T-cell (primary cell): ENCODE measurements at regions of chr14 and their contacts with region 1.

Region 1: DNA sequence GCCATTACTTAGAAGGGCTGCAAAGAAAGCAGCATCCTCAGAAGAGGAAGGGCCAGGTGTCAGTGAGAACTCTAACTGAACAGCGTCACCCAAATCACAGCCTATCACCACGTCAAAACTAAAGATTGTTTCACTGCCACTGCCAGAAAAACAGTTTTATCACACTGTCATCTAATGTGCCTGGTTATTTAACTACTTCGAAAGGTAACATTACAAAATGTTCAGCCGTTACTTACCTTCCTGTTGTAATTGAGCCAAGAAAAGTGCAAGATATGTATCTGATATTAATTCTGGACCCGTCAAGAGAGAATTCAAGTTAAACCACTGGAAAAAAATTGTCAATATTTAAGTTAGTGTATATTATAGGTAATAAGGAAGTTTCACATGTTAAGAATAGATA is 17.9 kb downstream of the ATXN3 start:
- DNase-seq: no peak
- ATAC-seq: no peak
- H3K4me3 ChIP-seq: no peak overlapping the region
- H3K4me3 Mint-ChIP-seq: no peak overlapping the region
- H3K27ac ChIP-seq: no peak overlapping the region
- H3K27ac Mint-ChIP-seq: no peak overlapping the region
- H3K4me1 ChIP-seq: no peaks in the 10 kb centered on the region
- H3K4me1 Mint-ChIP-seq: no peaks in the 10 kb centered on the region
- H3K27me3 ChIP-seq: no peaks in the 10 kb centered on the region
- H3K27me3 Mint-ChIP-seq: no peaks in the 10 kb centered on the region

Region 2: DNA sequence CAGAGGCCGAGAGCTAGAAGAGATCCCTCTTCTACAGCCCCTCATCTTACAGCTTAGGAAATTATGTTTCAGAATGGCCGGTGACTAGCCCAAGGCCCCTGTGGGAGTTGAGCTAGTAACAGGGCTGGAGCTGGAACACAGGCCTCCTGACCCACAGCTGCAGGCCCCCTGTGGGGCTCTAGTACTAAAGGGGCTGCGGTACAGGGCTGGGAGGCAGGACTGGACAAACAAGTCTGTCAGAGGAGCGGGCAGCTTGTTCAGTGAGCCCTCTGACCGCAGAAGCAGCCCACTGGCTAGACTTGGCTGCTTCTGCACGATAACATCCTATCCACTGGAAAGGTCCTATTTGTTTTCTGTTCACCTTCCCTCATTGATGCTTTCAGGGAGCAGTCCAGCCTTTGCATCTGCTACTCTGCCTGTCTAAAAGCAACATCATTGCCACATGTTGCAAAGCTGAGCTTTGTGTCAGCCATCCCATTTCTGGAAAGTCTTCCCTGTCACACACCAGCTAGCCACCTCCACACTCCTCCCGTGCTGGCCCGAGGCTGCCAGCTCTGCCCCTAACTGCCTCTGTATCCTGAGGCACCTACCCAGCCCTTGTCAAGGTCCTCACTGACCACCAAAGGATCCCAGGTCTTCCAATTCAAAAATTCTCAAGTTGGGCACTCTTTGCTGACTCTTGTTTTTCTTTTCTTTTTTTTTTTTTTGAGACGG is 1821.9 kb before region 1 on chr14:
- CTCF ChIA-PET with region 1: interaction called in 1 of 2 experiments, 10 read pairs
- POLR2A ChIA-PET with region 1: no interaction called
- DNase-seq: no peak
- ATAC-seq: no peak
- H3K4me3 ChIP-seq: no peak overlapping the region
- H3K4me3 Mint-ChIP-seq: no peak overlapping the region
- H3K27ac ChIP-seq: no peak overlapping the region
- H3K27ac Mint-ChIP-seq: no peak overlapping the region
- H3K4me1 ChIP-seq: peaks cover 0 to 3% of the 10 kb centered on the region in 2 experiments
- H3K4me1 Mint-ChIP-seq: peaks cover 2 to 6% (median 2%) of the 10 kb centered on the region in 3 donors
- H3K27me3 ChIP-seq: no peaks in the 10 kb centered on the region
- H3K27me3 Mint-ChIP-seq: no peaks in the 10 kb centered on the region

Region 3: DNA sequence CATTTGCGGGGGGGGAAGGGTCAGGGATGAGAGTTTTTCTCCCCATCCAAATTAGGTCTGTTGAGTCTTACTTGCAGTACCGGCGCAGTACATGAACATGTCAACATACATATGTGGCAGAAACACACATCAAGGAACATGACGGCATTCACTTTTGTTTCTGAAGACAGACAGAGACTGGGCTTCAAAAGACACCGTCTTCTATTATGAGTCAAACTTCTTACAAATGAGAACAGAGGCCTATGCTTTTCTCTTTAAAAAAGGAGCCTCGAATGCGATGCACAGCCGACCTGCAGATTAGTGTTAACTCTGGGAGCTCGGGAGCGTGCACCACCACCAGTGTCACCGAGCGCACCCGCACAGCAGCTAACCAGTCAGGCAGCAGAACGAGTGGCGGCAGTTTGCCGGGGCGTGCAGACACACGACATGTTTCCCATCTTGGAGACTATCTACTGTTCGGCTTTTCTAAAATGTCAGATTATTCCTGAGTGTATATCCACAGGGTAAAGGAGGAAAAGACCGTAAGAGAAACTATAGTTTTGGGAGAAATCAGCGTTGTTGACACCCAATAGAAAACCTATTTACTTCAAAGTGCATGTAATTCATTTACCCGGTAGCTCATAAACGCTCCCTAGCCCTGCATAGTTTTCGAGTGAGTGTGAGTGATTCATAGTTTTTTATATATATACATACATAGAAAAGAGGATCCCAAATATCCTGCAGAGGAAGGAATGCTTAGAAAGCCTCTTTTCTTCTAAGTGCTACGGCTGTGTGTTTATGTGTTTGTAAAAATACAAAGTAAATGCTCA is 1151.6 kb after region 1 on chr14:
- CTCF ChIA-PET with region 1: no interaction called
- POLR2A ChIA-PET with region 1: interaction called in 1 of 2 experiments, 10 read pairs
- DNase-seq: no peak
- ATAC-seq: peak in 1 of 4 experiments; percentile 58
- H3K4me3 ChIP-seq: no peak overlapping the region
- H3K4me3 Mint-ChIP-seq: no peak overlapping the region
- H3K27ac ChIP-seq: no peak overlapping the region
- H3K27ac Mint-ChIP-seq: no peak overlapping the region
- H3K4me1 ChIP-seq: no peaks in the 10 kb centered on the region
- H3K4me1 Mint-ChIP-seq: no peaks in the 10 kb centered on the region
- H3K27me3 ChIP-seq: no peaks in the 10 kb centered on the region
- H3K27me3 Mint-ChIP-seq: no peaks in the 10 kb centered on the region